ENCODE measurements at regions of chr12 and their contacts with region 1.

Region 1: DNA sequence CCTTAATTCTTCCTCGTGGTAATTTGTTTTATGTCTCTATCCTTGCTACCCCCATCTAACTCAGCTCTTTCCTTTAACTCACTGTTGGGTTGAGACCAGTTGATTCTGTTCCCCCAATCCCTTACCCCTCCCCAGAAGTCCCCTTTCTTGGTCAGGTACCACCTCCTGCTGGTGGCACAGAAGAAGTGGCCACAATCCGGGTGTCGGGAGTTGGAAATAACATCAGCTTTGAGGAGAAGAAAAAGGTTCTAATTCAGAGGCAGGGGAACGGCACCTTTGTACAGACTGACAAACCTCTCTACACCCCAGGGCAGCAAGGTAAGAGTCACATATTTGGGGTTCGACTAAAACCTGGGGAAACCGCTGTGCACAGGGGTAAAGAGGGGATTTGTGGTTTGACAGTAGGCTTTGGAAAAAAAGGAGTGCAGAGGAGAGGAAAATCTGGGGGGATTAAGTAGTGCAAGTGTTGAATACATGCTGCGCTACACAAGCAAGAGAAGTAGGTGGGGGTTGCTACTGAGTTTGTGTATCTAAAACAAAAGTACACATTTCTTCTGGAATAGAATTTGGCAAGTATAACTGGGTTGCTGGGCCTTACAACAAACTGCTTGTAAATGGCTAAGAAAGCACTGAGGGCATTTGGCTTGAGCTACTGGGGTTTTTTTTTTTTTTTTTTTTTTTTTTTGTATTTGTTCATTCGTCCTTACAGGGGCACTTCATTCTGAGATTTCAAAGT is 1.3 kb downstream of the A2ML1 start:
- H3K4me3 ChIP-seq: no peak overlapping the region
- H3K27ac ChIP-seq: no peak overlapping the region
- H3K4me1 ChIP-seq: no peaks in the 10 kb centered on the region
- CTCF ChIP-seq: no peak; the same call in 1 of the 2 replicates

Region 2: DNA sequence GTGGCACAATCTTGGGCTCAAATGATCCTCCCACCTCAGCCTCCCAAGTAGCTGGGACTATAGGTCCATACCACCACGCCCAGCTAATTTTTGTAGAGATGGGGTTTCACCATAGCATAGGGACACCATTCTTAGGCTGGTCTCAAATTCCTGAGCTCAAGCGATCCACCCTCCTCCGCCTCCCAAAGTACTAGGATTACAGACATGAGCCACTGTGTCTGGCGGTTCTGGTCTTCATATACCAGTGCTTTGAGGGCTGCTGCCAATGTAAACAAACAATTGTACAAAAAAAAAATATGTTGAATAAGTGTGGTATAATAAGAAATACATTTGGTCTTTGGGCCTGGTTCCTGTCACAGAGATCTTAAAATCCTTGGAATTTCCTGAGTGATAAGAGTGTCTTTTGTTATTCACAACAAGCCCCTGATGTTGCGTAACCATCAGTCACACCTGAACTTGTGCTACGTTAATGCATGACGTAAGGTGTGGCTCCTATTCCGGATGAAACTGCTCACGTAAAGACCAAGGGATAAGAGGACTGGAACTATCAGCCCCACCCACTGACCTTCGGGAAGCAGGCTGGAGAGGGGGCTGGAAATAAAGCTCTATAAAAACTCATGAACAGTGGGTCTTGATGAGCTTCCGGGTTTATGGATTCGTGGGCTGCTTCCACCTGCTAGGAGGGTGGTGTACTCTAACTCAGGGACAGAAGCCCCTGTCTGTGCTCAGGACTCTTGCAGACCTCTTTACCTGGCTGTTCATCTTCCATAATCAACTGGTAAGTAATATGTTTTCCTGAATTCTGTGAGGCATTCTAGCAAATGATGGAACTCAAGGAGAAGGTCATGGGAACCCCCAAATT is 142.5 kb before region 1 on chr12:
- CTCF ChIA-PET with region 1: interaction called, 17 read pairs
- POLR2A ChIA-PET with region 1: no interaction called
- H3K4me3 ChIP-seq: peak overlapping the region; percentile 20
- H3K27ac ChIP-seq: no peak overlapping the region
- H3K4me1 ChIP-seq: no peaks in the 10 kb centered on the region
- CTCF ChIP-seq: no peak

Measured in HEK293 (cell line).